ENCODE measurements at regions of chr22 and their contacts with region 1.

Region 1: GRCh38 chr22:32528984-32529982 is 54.7 kb downstream of the FBXO7 start:
- DNase-seq: peak; percentile 91
- ATAC-seq: peak; percentile 72
- H3K4me3 ChIP-seq: peak overlapping the region; percentile 27 to 52 (median 51); a peak in 3 of 6 replicates
- H3K27ac ChIP-seq: peak overlapping the region; percentile 76
- H3K4me1 ChIP-seq: peaks cover 65% of the 10 kb centered on the region
- H3K27me3 ChIP-seq: no peaks in the 10 kb centered on the region
- CTCF ChIP-seq: peak; percentile 99
- EP300 ChIP-seq: peak in 1 of 2 experiments; percentile 75; a peak in 2 of 4 replicates
- POLR2A ChIP-seq: 0 out of 4 replicates have a peak, but pooled peaks of 1 of the 2 experiments have one; percentile 31
- RAD21 ChIP-seq: peak; percentile 97

Region 2: DNA sequence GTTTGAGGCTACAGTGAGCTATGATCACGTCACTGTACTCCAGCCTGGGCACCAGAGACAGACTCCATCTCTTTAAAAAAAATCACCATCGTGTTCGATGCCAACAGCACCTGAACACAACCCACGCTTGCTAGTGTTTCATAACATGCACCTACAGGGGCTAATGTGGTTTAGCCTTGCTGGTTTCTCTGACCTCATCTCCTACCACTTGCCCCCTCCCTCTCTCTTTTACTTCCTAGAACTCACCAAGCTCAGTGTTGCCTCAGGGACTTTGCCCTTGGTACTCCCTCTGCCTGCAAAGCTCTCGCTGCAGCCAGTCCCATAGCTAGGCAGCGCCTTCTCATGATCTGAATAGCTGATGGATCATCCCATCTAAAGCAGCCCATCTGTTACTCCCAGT is 45.1 kb after region 1 on chr22:
- CTCF ChIA-PET with region 1: no interaction called
- POLR2A ChIA-PET with region 1: interaction called, 26 read pairs
- in situ Hi-C with region 1: no loop called
- intact Hi-C with region 1: no loop called
- DNase-seq: peak; percentile 70
- ATAC-seq: peak; percentile 98
- H3K4me3 ChIP-seq: no peak overlapping the region
- H3K27ac ChIP-seq: no peak overlapping the region
- H3K4me1 ChIP-seq: peaks cover 36% of the 10 kb centered on the region
- H3K27me3 ChIP-seq: no peaks in the 10 kb centered on the region
- CTCF ChIP-seq: peak; percentile 45
- EP300 ChIP-seq: no peak
- POLR2A ChIP-seq: no peak
- RAD21 ChIP-seq: no peak

Region 3: DNA sequence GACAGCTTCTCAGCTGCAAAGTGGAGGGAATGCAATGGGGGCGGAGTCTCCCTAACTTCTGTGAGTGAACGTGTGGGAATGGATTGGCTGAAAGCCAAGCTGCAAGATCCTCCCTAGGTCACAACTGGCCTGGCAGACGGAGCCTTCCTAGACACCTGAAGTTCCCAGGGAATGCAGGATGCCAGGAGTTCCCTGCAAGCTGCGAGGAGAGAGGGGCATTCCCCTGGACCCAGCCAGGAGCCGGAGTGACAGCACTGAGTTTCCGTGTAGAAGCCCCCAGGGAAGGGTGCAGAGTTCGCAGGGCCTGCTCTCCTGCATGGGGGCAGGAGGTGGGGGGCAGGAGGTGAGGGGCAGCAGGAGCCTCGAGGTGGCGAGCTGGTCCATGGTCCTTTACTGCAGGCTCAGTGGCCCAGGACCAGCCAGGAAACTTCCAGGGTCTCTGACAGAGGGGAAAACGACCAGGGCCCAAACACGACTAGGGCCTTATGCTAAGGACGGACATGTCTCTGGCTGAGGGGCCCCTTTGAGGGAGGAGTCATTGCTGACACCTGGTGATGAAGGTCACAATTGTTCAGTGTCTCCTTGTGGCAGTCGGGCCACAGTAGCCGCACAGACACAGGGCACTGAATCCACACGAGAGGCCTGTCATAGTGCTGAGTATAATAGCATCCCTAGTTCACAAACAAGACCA is 86.7 kb after region 1 on chr22:
- CTCF ChIA-PET with region 1: no interaction called
- POLR2A ChIA-PET with region 1: interaction called, 145 read pairs
- in situ Hi-C with region 1: no loop called
- intact Hi-C with region 1: loop called (anchors 2 kb)
- DNase-seq: peak; percentile 72
- ATAC-seq: peak; percentile 79
- H3K4me3 ChIP-seq: peak overlapping the region in 1 of 3 experiments; percentile 15; a peak in 2 of 6 replicates
- H3K27ac ChIP-seq: peak overlapping the region; percentile 52
- H3K4me1 ChIP-seq: peaks cover 58% of the 10 kb centered on the region
- H3K27me3 ChIP-seq: no peaks in the 10 kb centered on the region
- CTCF ChIP-seq: peak; percentile 38; the same call in 1 of the 2 replicates
- EP300 ChIP-seq: peak in 1 of 2 experiments; percentile 37; a peak in 1 of 4 replicates
- POLR2A ChIP-seq: no peak
- RAD21 ChIP-seq: no peak

Region 4: DNA sequence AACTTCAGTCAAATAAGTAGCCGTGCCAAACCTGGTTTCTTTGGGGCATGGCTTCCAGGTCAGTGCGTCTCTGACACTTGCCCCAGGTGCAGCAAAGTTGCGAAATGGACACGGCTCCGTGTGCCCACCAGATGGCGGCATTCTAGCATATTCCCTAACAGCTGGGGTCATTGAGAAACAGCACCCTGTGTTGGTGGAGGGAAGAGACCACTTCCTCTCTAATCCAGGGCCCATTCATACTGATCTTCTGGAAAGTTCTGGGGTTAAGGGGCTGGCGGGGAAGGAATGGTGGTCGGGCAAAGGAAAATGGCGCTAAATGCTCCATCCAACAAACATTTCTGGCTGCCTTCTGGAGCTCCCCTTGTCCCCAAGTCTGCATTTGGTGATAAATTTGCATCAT is 131.0 kb after region 1 on chr22:
- CTCF ChIA-PET with region 1: interaction called, 3 read pairs
- POLR2A ChIA-PET with region 1: interaction called, 5 read pairs
- in situ Hi-C with region 1: loop called (anchors 5 kb)
- intact Hi-C with region 1: loop called (anchors 1 kb)
- DNase-seq: peak; percentile 78
- ATAC-seq: peak; percentile 92
- H3K4me3 ChIP-seq: no peak overlapping the region
- H3K27ac ChIP-seq: no peak overlapping the region
- H3K4me1 ChIP-seq: peaks cover 18% of the 10 kb centered on the region
- H3K27me3 ChIP-seq: no peaks in the 10 kb centered on the region
- CTCF ChIP-seq: peak; percentile 97
- EP300 ChIP-seq: peak; percentile 25 to 63; a peak in 1 of 4 replicates
- POLR2A ChIP-seq: no peak
- RAD21 ChIP-seq: peak; percentile 97

Region 5: DNA sequence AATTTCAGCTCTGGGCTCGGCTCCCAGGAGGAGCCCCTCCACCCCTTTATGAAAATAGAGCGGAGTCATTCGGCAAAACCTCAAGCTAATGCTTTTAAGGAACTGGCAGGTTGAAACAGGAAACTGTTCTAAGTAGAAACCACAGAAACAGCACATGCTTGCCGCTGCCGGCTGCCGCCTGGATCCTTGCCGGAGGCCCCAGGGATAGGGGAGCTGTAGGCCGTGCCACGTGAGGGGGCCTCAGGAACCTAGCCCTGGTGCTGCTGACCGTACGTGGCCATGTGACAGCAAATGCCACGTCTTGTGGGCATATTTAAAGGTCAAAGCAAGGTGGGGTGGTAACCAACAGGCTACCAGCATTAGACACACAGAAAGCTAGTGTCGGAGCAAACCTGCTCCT is 194.4 kb after region 1 on chr22:
- CTCF ChIA-PET with region 1: no interaction called
- POLR2A ChIA-PET with region 1: no interaction called
- in situ Hi-C with region 1: no loop called
- intact Hi-C with region 1: no loop called
- DNase-seq: no peak
- ATAC-seq: no peak
- H3K4me3 ChIP-seq: no peak overlapping the region
- H3K27ac ChIP-seq: no peak overlapping the region
- H3K4me1 ChIP-seq: peaks cover 46% of the 10 kb centered on the region
- H3K27me3 ChIP-seq: no peaks in the 10 kb centered on the region
- CTCF ChIP-seq: no peak
- EP300 ChIP-seq: no peak
- POLR2A ChIP-seq: no peak
- RAD21 ChIP-seq: no peak

Region 6: DNA sequence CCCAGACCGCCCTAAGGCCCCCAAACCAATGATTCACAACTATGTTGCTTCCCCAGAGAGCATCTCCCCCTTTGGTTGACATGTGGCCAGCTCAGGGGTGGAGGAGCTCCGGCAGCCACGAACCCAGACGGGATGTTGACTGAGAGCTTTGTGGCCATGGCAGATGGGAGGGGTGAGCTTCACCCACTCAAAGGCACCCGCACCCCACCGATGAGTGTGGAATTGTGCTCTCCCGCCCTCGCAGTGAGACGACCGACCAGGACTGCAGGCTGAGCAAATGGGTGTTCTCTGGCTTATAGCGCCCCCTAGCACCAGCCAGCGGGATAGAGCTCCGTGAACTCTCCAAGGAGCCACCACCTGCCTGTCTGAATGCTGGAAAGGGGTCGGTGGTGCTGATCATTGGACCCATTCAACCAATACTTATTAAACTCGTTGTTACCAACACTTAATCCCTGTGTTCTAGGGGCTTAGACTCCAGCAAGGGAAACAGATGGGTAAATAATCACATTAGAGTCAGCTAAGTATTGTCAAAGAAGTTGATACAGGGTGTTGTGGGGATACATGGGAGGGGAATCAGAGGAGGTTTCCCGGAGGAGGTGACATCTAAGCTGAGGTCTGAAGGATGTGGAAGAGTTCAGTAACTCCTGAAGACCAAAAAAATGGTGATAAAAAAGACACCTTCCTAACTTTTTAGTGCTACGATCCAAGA is 267.7 kb after region 1 on chr22:
- CTCF ChIA-PET with region 1: interaction called, 11 read pairs
- POLR2A ChIA-PET with region 1: interaction called, 108 read pairs
- in situ Hi-C with region 1: loop called (anchors 5 kb)
- intact Hi-C with region 1: loop called (anchors 1 kb)
- DNase-seq: peak; percentile 44
- ATAC-seq: peak; percentile 76
- H3K4me3 ChIP-seq: no peak overlapping the region
- H3K27ac ChIP-seq: no peak overlapping the region
- H3K4me1 ChIP-seq: peaks cover 62% of the 10 kb centered on the region
- H3K27me3 ChIP-seq: no peaks in the 10 kb centered on the region
- CTCF ChIP-seq: peak; percentile 98
- EP300 ChIP-seq: no peak
- POLR2A ChIP-seq: no peak
- RAD21 ChIP-seq: peak; percentile 97

Region 7: GRCh38 chr22:32985899-32986765 is 456.8 kb after region 1 on chr22:
- CTCF ChIA-PET with region 1: no interaction called
- POLR2A ChIA-PET with region 1: no interaction called
- in situ Hi-C with region 1: loop called (anchors 10 kb)
- intact Hi-C with region 1: loop called (anchors 10 kb)
- DNase-seq: peak; percentile 70
- ATAC-seq: peak; percentile 99
- H3K4me3 ChIP-seq: no peak overlapping the region
- H3K27ac ChIP-seq: no peak overlapping the region
- H3K4me1 ChIP-seq: peaks cover 8% of the 10 kb centered on the region; the same call in 1 of the 2 replicates
- H3K27me3 ChIP-seq: no peaks in the 10 kb centered on the region
- CTCF ChIP-seq: peak; percentile 96
- EP300 ChIP-seq: no peak
- POLR2A ChIP-seq: no peak
- RAD21 ChIP-seq: peak; percentile 89

Measured in HepG2 (cell line).